ENCODE measurements at regions of chr4 and their contacts with region 1.

Region 1: GRCh38 chr4:23934915-23935314 is 45.1 kb upstream of the PPARGC1A start:
- DNase-seq: no peak
- H3K4me3 ChIP-seq: no peak overlapping the region
- H3K27ac ChIP-seq: no peak overlapping the region
- H3K4me1 ChIP-seq: peaks cover 6 to 33% (median 22%) of the 10 kb centered on the region in 4 experiments
- H3K27me3 ChIP-seq: no peaks in the 10 kb centered on the region
- CTCF ChIP-seq: no peak
- EP300 ChIP-seq: no peak
- POLR2A ChIP-seq: no peak
- RAD21 ChIP-seq: no peak

Region 2: DNA sequence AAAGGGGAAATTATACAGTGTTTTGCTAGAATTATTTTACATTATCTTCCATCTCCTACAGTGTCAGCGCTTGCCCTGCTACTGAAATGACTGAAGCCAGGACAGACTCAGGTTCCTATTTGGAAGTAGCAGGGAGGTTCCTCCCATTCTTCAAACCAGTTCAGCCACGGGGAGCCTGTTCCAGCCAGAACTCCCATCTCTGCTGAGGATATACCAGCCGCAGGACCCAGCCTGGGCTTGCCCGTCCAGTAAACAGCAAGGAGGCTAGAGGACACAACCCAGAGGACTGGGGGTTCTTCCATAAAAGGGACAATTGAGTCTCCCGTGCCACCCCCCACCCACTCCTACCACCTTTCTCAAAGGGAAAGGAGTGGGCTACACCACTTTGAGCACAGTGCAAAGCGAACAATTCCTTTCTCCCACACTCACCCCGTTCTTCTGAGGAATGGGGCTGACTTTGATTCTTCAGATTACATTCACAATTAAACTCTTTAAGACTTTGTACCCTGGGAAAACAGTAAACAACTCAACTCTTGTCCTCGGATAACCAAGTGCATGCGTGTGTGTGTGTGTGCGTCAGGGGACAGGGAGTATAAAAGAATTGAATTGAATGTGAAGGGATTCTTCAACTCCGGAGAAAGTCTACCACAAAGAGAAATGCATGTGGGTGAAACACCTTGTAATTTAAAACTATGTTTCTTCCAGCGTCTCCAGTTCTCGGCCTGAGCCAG is 14.0 kb before region 1 on chr4:
- CTCF ChIA-PET with region 1: interaction called, 10 read pairs
- POLR2A ChIA-PET with region 1: no interaction called
- DNase-seq: no peak
- H3K4me3 ChIP-seq: no peak overlapping the region
- H3K27ac ChIP-seq: no peak overlapping the region
- H3K4me1 ChIP-seq: peaks cover 0 to 2% (median 0%) of the 10 kb centered on the region in 4 experiments; a peak in 2 of 7 replicates
- H3K27me3 ChIP-seq: no peaks in the 10 kb centered on the region
- CTCF ChIP-seq: no peak
- EP300 ChIP-seq: no peak
- POLR2A ChIP-seq: no peak
- RAD21 ChIP-seq: no peak

Region 3: GRCh38 chr4:23956601-23957364 is 21.9 kb after region 1 on chr4:
- CTCF ChIA-PET with region 1: interaction called, 17 read pairs
- POLR2A ChIA-PET with region 1: no interaction called
- DNase-seq: no peak
- H3K4me3 ChIP-seq: no peak overlapping the region
- H3K27ac ChIP-seq: no peak overlapping the region
- H3K4me1 ChIP-seq: no peaks in the 10 kb centered on the region; a peak in 1 of 7 replicates
- H3K27me3 ChIP-seq: no peaks in the 10 kb centered on the region
- CTCF ChIP-seq: no peak
- EP300 ChIP-seq: no peak
- POLR2A ChIP-seq: no peak
- RAD21 ChIP-seq: no peak

Region 4: GRCh38 chr4:23966725-23967124 is 31.8 kb after region 1 on chr4:
- CTCF ChIA-PET with region 1: interaction called, 21 read pairs
- POLR2A ChIA-PET with region 1: interaction called, 3 read pairs
- DNase-seq: no peak
- H3K4me3 ChIP-seq: no peak overlapping the region
- H3K27ac ChIP-seq: no peak overlapping the region
- H3K4me1 ChIP-seq: peaks cover 0 to 2% (median 0%) of the 10 kb centered on the region in 4 experiments; a peak in 2 of 7 replicates
- H3K27me3 ChIP-seq: no peaks in the 10 kb centered on the region; a peak in 1 of 7 replicates
- CTCF ChIP-seq: peak; percentile 57 to 90 (median 80)
- EP300 ChIP-seq: no peak
- POLR2A ChIP-seq: no peak
- RAD21 ChIP-seq: peak; percentile 72 to 77